ENCODE measurements at regions of chr12 and their contacts with region 1.

Region 1: GRCh38 chr12:122752464-122753318 is at the start of gene DENR:
- DNase-seq: peak; percentile 96 to 100
- H3K4me3 ChIP-seq: peak within 1 kb of the TSS; percentile 79 to 98 (median 88)
- H3K27ac ChIP-seq: peak within 1 kb of the TSS; percentile 83
- H3K4me1 ChIP-seq: peaks cover 2 to 9% (median 6%) of the 10 kb centered on the region in 4 experiments; a peak in 5 of 7 replicates
- H3K27me3 ChIP-seq: no peaks in the 10 kb centered on the region
- CTCF ChIP-seq: peak; percentile 87 to 95 (median 95)
- EP300 ChIP-seq: 0 out of 3 replicates have a peak, but pooled peaks of 1 of the 2 experiments have one; percentile 6
- POLR2A ChIP-seq: peak; percentile 79 to 96
- RAD21 ChIP-seq: peak; percentile 93 to 96
- total RNA-seq, gene DENR: 78.1 and 84.0 TPM in 2 replicates

Region 2: GRCh38 chr12:122635471-122635870 is 117.2 kb before region 1 on chr12:
- CTCF ChIA-PET with region 1: interaction called, 19 read pairs
- POLR2A ChIA-PET with region 1: interaction called, 16 read pairs
- DNase-seq: no peak
- H3K4me3 ChIP-seq: no peak overlapping the region
- H3K27ac ChIP-seq: no peak overlapping the region
- H3K4me1 ChIP-seq: no peaks in the 10 kb centered on the region
- H3K27me3 ChIP-seq: no peaks in the 10 kb centered on the region
- CTCF ChIP-seq: no peak
- EP300 ChIP-seq: no peak
- POLR2A ChIP-seq: no peak
- RAD21 ChIP-seq: no peak

Region 3: DNA sequence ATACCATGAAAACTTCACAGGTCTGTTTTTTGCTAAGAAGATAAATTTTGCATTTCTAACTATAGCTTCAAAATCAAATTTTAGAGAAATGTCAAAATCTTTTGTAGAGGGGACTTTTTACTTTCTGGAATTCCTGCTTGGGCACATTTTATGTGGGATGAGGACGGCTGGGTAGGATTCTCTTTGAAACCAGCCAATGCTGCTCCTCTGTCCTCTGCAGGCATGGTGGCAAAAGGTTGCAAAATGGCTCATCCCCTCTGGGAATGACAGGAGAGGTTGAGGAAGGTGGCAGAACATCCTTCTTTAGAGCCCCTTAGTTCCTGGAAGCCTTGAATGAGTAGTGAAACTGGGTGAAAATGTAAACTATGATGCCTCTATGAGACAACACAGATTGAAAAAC is 15.0 kb after region 1 on chr12:
- CTCF ChIA-PET with region 1: interaction called, 7 read pairs
- POLR2A ChIA-PET with region 1: interaction called, 12 read pairs
- DNase-seq: no peak
- H3K4me3 ChIP-seq: no peak overlapping the region
- H3K27ac ChIP-seq: no peak overlapping the region
- H3K4me1 ChIP-seq: no peaks in the 10 kb centered on the region
- H3K27me3 ChIP-seq: no peaks in the 10 kb centered on the region
- CTCF ChIP-seq: no peak
- EP300 ChIP-seq: no peak
- POLR2A ChIP-seq: no peak
- RAD21 ChIP-seq: no peak

Region 4: DNA sequence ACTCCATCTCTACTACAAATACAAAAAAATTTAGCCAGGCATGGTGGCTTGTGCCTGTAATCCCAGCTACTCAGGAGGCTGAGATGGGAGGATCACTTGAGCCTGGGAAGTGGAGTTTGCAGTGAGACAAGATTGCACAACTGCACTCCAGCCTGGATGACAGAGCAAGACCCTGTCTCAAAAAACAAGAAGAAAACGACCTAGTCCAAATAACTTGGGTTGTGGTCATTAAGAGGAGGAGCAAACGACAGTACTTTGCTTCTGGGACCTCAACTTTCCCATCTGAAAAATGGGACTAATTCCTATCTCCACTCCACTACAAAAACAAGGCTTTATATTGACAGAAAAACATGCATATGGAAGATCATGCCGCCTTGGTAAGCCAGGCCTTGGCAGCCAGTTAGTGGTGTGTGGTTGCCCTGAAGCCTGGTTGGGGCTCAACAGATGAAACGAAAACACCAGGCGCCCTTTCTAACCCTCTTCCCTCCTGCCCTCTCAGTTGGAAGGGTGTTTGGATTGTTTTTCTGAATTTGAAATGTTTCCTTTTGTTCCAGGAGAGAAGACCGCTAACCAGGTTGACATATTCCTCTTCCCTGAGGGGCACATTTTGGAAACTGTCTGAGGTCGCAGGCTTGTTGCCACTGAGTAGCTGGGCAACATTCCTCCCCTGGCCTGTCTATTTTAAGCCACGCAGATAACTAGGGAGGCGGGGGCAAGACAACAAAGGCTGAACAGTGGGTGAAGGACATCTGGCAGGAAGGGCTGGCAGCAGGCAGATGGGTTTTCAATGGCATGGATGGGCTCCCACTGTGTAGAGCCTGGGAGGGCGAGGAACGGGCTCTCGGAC is 157.0 kb after region 1 on chr12:
- CTCF ChIA-PET with region 1: no interaction called
- POLR2A ChIA-PET with region 1: no interaction called
- DNase-seq: no peak
- H3K4me3 ChIP-seq: no peak overlapping the region
- H3K27ac ChIP-seq: no peak overlapping the region
- H3K4me1 ChIP-seq: peaks cover 0 to 6% (median 5%) of the 10 kb centered on the region in 4 experiments; a peak in 5 of 7 replicates
- H3K27me3 ChIP-seq: no peaks in the 10 kb centered on the region
- CTCF ChIP-seq: no peak
- EP300 ChIP-seq: peak in 1 of 2 experiments; percentile 27; a peak in 1 of 3 replicates
- POLR2A ChIP-seq: no peak
- RAD21 ChIP-seq: no peak